ENCODE measurements at regions of chr11 and their contacts with region 1.

Region 1: GRCh38 chr11:108222686-108223448 is at the start of gene ATM:
- DNase-seq: peak; percentile 99
- H3K4me3 Mint-ChIP-seq: no peak within 1 kb of the TSS
- H3K27ac Mint-ChIP-seq: no peak within 1 kb of the TSS
- H3K4me1 Mint-ChIP-seq: peaks cover 46% of the 10 kb centered on the region
- H3K27me3 Mint-ChIP-seq: no peaks in the 10 kb centered on the region
- total RNA-seq, gene ATM: 34.1 and 34.7 TPM in 2 replicates

Region 2: GRCh38 chr11:108008656-108009496 is 214.0 kb before region 1 on chr11 and contains the start of gene CUL5:
- intact Hi-C with region 1: loop called (anchors 5 kb)
- DNase-seq: peak; percentile 86
- H3K4me3 Mint-ChIP-seq: peak within 1 kb of the TSS; percentile 91
- H3K27ac Mint-ChIP-seq: peak within 1 kb of the TSS; percentile 94
- H3K4me1 Mint-ChIP-seq: peaks cover 16% of the 10 kb centered on the region
- H3K27me3 Mint-ChIP-seq: no peaks in the 10 kb centered on the region
- total RNA-seq, gene CUL5: 33.7 and 34.2 TPM in 2 replicates

Region 3: GRCh38 chr11:108199446-108200321 is 23.2 kb before region 1 on chr11:
- intact Hi-C with region 1: loop called (anchors 1 kb)
- DNase-seq: no peak
- H3K4me3 Mint-ChIP-seq: no peak overlapping the region
- H3K27ac Mint-ChIP-seq: peak overlapping the region; percentile 73
- H3K4me1 Mint-ChIP-seq: peaks cover 42% of the 10 kb centered on the region
- H3K27me3 Mint-ChIP-seq: no peaks in the 10 kb centered on the region

Region 4: GRCh38 chr11:108467091-108467823 is 244.4 kb after region 1 on chr11 and contains the start of gene C11orf65:
- intact Hi-C with region 1: loop called (anchors 1 kb)
- DNase-seq: peak; percentile 94
- H3K4me3 Mint-ChIP-seq: peak within 1 kb of the TSS; percentile 96
- H3K27ac Mint-ChIP-seq: peak within 1 kb of the TSS; percentile 100
- H3K4me1 Mint-ChIP-seq: peaks cover 16% of the 10 kb centered on the region
- H3K27me3 Mint-ChIP-seq: no peaks in the 10 kb centered on the region
- total RNA-seq, gene C11orf65: 0.43 and 0.97 TPM in 2 replicates

Region 5: GRCh38 chr11:108664730-108665525 is 442.1 kb after region 1 on chr11 and contains the start of gene DDX10:
- intact Hi-C with region 1: loop called (anchors 1 kb)
- DNase-seq: peak; percentile 98
- H3K4me3 Mint-ChIP-seq: peak within 1 kb of the TSS; percentile 99
- H3K27ac Mint-ChIP-seq: peak within 1 kb of the TSS; percentile 97
- H3K4me1 Mint-ChIP-seq: peaks cover 28% of the 10 kb centered on the region
- H3K27me3 Mint-ChIP-seq: peaks cover 6% of the 10 kb centered on the region
- total RNA-seq, gene DDX10: 57.8 TPM in 2 replicates

Measured in activated T-helper 2 cell treated with anti-CD3 and anti-CD28 coated beads, Interferon-gamma antibody, Interleukin-2, Interleukin-4, amounts not matched to agents 10 μg/mL and 5 μg/mL and 100 μg/mL, durations not matched to agents 14 hours and 24 hours and 36 hours (primary cell).